ENCODE measurements at regions of chr14 and their contacts with region 1.

Region 1: GRCh38 chr14:74249433-74250375 is 10.5 kb downstream of the VSX2 start:
- DNase-seq: no peak
- H3K4me3 ChIP-seq: no peak overlapping the region
- H3K4me3 Mint-ChIP-seq: no peak overlapping the region
- H3K27ac Mint-ChIP-seq: no peak overlapping the region
- H3K4me1 ChIP-seq: no peaks in the 10 kb centered on the region
- H3K4me1 Mint-ChIP-seq: peaks cover 13% of the 10 kb centered on the region
- H3K27me3 ChIP-seq: no peaks in the 10 kb centered on the region; the same call in 1 of the 2 replicates
- H3K27me3 Mint-ChIP-seq: peaks cover 8% of the 10 kb centered on the region
- CTCF ChIP-seq: no peak

Region 2: DNA sequence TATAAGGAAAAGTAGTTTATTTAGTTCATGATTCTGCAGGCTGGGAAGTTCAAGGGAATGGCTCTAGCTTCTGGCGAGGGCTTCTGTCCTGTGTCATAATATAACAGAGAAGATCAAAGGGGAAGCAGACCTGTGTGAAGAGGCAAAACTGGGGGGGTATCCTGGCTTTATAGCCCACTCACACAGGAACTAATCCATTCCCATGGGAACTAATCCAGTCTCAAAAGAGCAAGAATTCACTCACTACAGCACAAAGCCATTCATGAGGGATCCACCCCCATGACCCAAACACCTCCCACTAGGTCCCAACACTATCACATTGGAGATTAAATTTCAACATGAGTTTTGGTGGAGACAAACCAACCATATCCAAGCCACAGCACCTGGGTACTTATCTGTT is 172.3 kb before region 1 on chr14:
- CTCF ChIA-PET with region 1: no interaction called
- POLR2A ChIA-PET with region 1: no interaction called
- intact Hi-C with region 1: no loop called
- DNase-seq: no peak
- H3K4me3 ChIP-seq: no peak overlapping the region
- H3K4me3 Mint-ChIP-seq: no peak overlapping the region
- H3K27ac Mint-ChIP-seq: no peak overlapping the region
- H3K4me1 ChIP-seq: peaks cover 10% of the 10 kb centered on the region
- H3K4me1 Mint-ChIP-seq: peaks cover 13% of the 10 kb centered on the region
- H3K27me3 ChIP-seq: no peaks in the 10 kb centered on the region
- H3K27me3 Mint-ChIP-seq: no peaks in the 10 kb centered on the region
- CTCF ChIP-seq: no peak

Region 3: DNA sequence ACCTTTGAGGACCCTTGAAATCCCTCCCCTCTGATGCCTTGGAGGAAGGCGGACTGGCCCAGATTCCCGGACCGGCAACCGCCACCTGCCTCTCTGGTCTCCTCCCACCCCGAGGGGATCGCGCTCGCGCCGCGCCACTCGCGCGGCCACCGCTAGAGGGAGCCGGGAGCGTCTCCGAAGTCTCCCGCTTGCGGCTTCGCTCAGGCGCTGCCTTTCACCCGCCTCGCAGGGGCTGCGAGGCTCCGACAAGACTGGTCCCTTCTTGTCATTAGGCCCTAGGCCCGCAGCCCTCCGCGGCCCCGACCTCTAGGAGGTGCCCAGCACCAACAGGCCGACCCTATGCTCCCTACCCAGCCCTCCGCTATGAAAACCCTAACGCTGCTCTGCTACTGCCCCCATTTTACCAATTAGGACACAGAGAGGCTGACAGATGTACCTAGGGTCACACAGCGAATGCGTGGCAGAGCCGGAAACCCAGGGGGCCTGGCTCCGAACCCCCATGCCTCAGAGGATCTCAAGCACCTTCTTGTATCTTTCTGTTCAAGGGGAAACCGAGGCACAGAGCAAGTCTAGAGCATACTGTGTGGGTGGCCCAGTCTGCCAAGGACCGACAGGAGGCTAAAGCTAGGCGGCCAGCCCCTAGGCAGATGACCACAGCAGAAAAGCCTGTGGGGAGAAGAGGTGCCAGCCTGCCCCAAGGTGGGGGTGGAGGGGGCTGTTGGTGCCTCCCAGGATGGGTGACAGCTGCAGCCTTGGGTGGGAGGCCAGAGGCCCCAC is 31.8 kb before region 1 on chr14:
- CTCF ChIA-PET with region 1: interaction called, 5 read pairs
- POLR2A ChIA-PET with region 1: no interaction called
- intact Hi-C with region 1: loop called (anchors 1 kb)
- DNase-seq: peak; percentile 76 to 88
- H3K4me3 ChIP-seq: peak overlapping the region; percentile 13; the same call in 1 of the 2 replicates
- H3K4me3 Mint-ChIP-seq: no peak overlapping the region
- H3K27ac Mint-ChIP-seq: no peak overlapping the region
- H3K4me1 ChIP-seq: no peaks in the 10 kb centered on the region
- H3K4me1 Mint-ChIP-seq: no peaks in the 10 kb centered on the region
- H3K27me3 ChIP-seq: peaks cover 1% of the 10 kb centered on the region; the same call in 1 of the 2 replicates
- H3K27me3 Mint-ChIP-seq: peaks cover 5% of the 10 kb centered on the region
- CTCF ChIP-seq: peak; percentile 82 to 98